Transverse colon (tissue), 4 donors: ENCODE measurements at regions of chr9 and their contacts with region 1.

Region 1: DNA sequence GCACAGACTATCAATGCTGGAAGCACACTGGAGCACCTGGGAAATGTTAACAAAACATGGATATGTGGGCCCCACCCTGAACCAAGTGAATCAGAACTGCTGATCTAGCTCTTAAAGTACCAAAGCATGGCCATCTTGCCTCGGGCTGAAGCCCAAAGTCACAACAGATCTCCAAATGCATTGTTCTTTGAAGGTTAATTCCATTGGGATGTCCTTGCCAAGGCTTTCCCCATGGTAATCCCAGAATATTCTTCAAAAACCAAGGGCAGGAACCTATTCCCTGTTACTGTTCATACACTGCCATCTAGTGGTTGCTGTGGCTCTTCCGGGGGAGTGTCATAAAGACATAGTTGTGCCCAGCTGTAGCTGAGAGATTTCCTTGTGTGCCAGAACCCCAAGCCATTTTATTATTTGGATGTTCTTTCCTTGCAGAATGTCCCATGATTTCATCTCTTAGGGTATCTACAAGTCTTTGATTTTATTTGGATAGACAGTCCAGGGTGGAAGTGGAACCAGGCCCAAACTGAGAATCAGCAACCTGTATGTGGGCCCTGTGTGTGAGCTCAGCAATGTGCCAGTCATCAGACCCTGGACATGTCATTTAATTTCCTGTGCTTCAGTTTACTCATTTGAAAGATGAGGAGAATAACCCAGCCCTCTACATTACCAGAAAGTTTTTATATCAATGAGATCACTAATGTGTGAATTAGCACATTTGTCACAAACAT is 290.0 kb downstream of the ACTL7B start:
- DNase-seq: peak; percentile 59
- H3K4me3 ChIP-seq: no peak overlapping the region
- H3K27ac ChIP-seq: no peak overlapping the region
- H3K4me1 ChIP-seq: peaks cover 0 to 3% (median 1%) of the 10 kb centered on the region in 4 donors
- H3K27me3 ChIP-seq: no peaks in the 10 kb centered on the region
- CTCF ChIP-seq: peak; percentile 76 to 89 (median 80)
- EP300 ChIP-seq: no peak
- POLR2A ChIP-seq: no peak

Region 2: DNA sequence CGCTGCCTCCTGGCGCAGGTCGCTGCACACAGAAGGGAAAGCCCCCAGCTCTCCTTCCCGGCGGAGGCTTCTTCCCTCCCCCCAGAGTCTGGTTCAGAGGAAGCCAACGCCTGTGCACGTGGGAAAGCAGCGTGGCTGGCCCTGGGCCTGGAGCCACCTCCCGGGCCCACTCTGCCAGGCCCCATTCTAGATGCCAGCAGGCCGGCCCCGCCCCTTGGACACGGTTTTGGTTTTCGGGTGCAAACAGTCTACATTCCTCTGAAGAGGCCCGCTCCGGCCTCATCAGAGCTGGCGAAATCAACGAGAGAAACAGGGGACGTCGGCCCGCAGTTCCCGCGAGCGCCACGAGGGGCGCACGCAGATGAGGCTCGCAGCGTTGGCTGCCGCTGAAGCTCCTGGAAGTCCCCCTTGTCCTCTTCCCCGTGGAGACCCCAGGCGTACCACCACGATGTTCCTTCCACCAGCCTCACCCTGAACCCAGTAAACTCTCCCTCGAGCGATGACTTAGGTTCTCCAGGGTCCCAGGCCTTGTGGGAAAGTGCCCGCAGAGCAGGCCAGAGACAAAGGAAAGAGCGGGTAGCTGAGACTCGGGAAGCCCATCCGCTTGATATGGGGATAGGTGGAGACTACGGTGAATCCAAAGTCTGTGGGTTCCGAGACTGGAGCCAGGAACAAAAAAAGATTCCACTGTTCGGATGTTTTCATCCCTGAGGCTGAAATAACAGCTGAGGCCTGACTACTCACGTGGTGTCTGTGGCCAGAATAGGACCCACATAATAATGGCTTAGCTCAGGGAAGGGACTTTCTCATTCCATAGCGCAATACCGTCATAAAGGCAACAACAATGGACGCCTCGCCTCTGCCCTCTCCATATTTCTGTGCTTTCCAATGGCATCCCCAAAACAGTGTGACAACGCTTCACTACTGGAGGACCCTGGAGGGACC is 1140.4 kb before region 1 on chr9:
- in situ Hi-C with region 1: no loop called
- intact Hi-C with region 1: loop called (anchors 5 kb)
- DNase-seq: peak; percentile 68
- H3K4me3 ChIP-seq: peak overlapping the region in 2 of 4 donors; percentile 17 to 39
- H3K27ac ChIP-seq: peak overlapping the region in 3 of 4 donors; percentile 27 to 58 (median 44)
- H3K4me1 ChIP-seq: peaks cover 0 to 14% (median 4%) of the 10 kb centered on the region in 4 donors
- H3K27me3 ChIP-seq: no peaks in the 10 kb centered on the region
- CTCF ChIP-seq: peak; percentile 89 to 99 (median 98)
- EP300 ChIP-seq: no peak
- POLR2A ChIP-seq: no peak

Region 3: DNA sequence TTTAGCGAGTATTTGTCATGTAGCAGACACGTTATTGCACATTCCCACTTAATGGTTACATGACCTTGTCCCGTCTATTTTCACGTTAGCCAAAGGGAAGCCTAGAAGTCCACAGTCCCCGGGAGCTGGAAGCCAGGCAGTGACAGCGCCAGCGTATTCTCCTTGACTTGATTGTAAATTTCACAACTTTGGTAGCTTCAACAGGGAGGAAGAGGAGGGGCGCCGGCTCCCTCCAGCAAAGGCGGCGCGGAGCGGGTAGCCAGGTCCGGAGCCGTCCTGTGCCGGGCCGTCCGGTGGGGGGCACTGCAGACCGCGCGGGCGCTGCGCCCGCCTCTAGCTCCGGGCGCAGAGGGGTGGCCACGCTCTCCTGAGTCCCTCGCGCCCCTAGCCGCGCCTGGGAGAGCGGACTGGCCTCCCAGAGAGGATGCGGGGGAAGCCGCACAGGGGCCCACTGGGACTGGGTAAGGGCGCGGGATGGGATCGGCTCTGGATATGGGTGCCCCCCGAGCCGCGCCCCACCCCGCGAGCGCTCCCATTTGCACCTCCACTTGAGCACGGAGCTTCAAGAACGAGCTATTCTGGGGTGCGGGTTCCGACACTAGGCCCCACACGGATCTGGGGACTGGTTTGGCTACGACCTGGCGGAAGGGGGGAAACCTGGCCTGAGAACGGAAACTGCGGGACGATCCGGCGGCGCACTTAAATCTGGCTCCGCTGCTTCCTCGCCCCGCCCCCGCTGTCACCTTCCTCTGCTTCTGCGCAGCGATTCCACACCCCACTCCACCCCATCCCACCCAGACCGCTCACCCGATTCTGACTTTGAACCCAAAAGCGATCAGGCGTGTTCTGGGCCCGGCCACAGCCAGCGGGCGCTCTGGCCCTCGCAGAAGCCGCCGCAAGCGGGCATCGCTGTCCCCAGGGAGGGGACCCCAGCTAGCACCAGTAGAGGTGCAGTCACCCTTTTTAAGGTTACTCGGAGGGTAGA is 1100.1 kb before region 1 on chr9:
- in situ Hi-C with region 1: loop called (anchors 10 to 25 kb)
- intact Hi-C with region 1: loop called (anchors 5 kb)
- DNase-seq: peak; percentile 75
- H3K4me3 ChIP-seq: peak overlapping the region; percentile 47 to 68 (median 58)
- H3K27ac ChIP-seq: peak overlapping the region in 3 of 4 donors; percentile 69 to 74 (median 70)
- H3K4me1 ChIP-seq: peaks cover 0 to 14% (median 9%) of the 10 kb centered on the region in 4 donors
- H3K27me3 ChIP-seq: peaks cover 8% of the 10 kb centered on the region
- CTCF ChIP-seq: peak; percentile 75 to 93 (median 91)
- EP300 ChIP-seq: no peak
- POLR2A ChIP-seq: peak; percentile 18

Region 4: DNA sequence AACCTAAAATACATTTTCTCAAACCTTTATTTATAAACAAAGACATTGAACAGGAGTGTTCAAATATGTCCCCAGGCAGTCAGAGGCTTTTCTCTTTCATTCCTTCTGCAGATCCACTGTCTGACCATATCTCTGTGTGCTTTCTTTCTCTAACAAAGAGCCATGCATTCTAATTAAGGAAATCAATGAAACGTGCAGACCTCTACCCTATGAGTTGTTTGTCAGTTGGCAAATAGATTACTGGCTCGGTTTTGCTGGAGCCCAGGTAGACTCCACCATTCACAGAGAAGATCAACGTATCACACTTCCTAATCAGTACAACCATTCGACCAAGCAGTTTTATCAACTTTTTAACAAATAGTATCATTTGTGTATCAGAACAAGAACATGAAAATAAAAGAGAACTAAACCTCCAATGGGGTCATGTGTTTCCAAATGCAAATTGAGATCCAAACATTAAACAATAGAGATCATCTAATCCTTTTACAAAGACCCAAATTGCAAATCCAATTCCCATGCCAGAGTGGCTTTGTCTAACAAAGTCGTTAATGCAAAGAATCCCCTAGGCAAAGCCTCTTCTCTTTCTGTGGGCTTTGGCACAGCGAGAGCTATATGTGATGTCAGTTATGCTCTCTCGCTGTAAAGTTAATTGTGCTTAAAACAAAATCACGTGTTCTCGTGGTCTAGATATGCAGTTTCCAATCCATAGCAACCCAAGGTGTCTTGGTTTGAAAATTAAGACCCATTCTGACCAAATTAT is 1093.1 kb before region 1 on chr9:
- in situ Hi-C with region 1: loop called (anchors 10 to 25 kb)
- intact Hi-C with region 1: loop called (anchors 5 kb)
- DNase-seq: no peak
- H3K4me3 ChIP-seq: no peak overlapping the region
- H3K27ac ChIP-seq: no peak overlapping the region
- H3K4me1 ChIP-seq: no peaks in the 10 kb centered on the region
- H3K27me3 ChIP-seq: no peaks in the 10 kb centered on the region
- CTCF ChIP-seq: no peak
- EP300 ChIP-seq: no peak
- POLR2A ChIP-seq: no peak

Region 5: DNA sequence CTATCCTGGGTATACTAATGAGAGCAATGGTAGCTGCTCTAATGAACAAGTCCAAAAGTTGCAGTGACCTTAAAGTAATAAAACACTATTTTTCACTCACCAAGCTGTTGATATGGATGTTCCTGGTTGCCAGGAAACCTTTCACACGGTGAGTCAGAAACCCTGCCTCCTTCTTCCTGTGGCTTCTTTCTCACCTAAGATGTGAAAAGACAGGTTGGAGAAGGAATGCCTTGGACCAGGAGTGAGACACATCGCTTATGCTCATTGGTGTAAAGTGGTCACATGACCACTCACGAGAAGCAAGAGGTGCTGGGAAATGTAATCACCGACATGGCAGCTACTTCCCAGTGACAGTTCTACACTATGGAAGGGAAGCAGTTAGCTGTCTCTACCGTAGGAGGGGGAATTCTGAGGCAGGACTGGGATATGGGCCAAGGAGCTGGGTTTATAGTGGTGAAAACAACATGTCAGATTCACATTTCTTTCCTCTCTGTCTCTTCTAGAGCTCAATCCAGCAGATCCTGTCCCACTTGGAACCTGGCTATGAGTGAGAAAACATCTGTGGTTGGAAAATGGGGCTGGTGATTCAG is 755.8 kb before region 1 on chr9:
- in situ Hi-C with region 1: loop called in 1 of 4 experiments (anchors 25 kb)
- intact Hi-C with region 1: no loop called
- DNase-seq: peak; percentile 18
- H3K4me3 ChIP-seq: no peak overlapping the region
- H3K27ac ChIP-seq: no peak overlapping the region
- H3K4me1 ChIP-seq: peaks cover 0 to 4% (median 0%) of the 10 kb centered on the region in 4 donors
- H3K27me3 ChIP-seq: no peaks in the 10 kb centered on the region
- CTCF ChIP-seq: no peak
- EP300 ChIP-seq: no peak
- POLR2A ChIP-seq: no peak

Region 6: GRCh38 chr9:108339251-108339650 is 226.6 kb before region 1 on chr9:
- in situ Hi-C with region 1: no loop called
- intact Hi-C with region 1: no loop called
- DNase-seq: no peak
- H3K4me3 ChIP-seq: no peak overlapping the region
- H3K27ac ChIP-seq: no peak overlapping the region
- H3K4me1 ChIP-seq: no peaks in the 10 kb centered on the region
- H3K27me3 ChIP-seq: no peaks in the 10 kb centered on the region
- CTCF ChIP-seq: no peak
- EP300 ChIP-seq: no peak
- POLR2A ChIP-seq: no peak